Activated CD4-positive, alpha-beta memory T cell treated with anti-CD3 and anti-CD28 coated beads, Interleukin-2, amount 10 ng/mL, durations not matched to agents 7 days and 5 days (primary cell): ENCODE measurements at regions of chr7 and their contacts with region 1.

Region 1: GRCh38 chr7:129218514-129219062 is 6.2 kb upstream of the AHCYL2 start:
- DNase-seq: peak; percentile 82
- H3K4me3 Mint-ChIP-seq: no peak overlapping the region
- H3K27ac Mint-ChIP-seq: no peak overlapping the region
- H3K4me1 Mint-ChIP-seq: peaks cover 13% of the 10 kb centered on the region
- H3K27me3 Mint-ChIP-seq: peaks cover 6% of the 10 kb centered on the region

Region 2: DNA sequence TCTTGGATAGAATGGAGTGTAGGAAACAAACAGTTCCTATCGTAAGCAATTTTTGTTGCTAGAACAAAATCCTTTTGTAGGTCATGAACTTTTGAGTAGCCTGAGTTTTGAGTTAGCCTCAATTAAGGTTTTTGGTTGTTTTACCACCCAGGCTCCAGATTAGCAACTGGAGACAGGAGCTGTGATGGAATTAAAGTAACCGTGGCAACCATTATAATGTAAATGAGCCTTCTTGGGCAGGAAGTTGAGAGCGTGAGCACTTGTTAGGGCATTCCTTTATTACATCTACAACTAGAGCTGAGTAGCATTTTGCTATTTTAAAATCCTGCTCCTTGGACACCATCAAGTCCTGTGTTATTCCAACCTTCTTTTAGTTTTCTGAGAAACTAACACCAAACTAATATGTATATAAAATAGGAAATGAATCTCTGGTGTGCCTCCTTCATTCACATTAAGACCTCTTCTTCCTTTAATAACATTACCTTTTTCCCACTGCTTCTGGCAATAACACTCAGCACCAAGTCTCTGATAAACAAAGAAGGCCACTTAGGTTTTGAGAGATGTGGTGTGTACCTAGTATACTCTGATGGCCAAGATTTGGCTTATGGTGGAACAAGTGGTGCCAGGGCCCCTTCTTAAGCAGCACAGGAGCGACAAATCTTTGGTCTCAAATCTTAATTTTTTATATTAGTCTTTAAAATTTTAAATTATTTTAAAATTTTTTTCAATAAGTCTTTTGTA is 40.2 kb after region 1 on chr7:
- CTCF ChIA-PET with region 1: interaction called, 11 read pairs
- POLR2A ChIA-PET with region 1: interaction called, 4 read pairs
- DNase-seq: no peak
- H3K4me3 Mint-ChIP-seq: no peak overlapping the region
- H3K27ac Mint-ChIP-seq: no peak overlapping the region
- H3K4me1 Mint-ChIP-seq: peaks cover 14% of the 10 kb centered on the region
- H3K27me3 Mint-ChIP-seq: no peaks in the 10 kb centered on the region

Region 3: GRCh38 chr7:129343099-129343700 is 124.6 kb after region 1 on chr7:
- CTCF ChIA-PET with region 1: interaction called, 10 read pairs
- POLR2A ChIA-PET with region 1: no interaction called
- DNase-seq: no peak
- H3K4me3 Mint-ChIP-seq: no peak overlapping the region
- H3K27ac Mint-ChIP-seq: no peak overlapping the region
- H3K4me1 Mint-ChIP-seq: peaks cover 41% of the 10 kb centered on the region
- H3K27me3 Mint-ChIP-seq: peaks cover 4% of the 10 kb centered on the region